Tibial artery (tissue), 4 donors: ENCODE measurements at regions of chr12 and their contacts with region 1.

Region 1: GRCh38 chr12:40152783-40153383 is 47.0 kb upstream of the SLC2A13 start:
- DNase-seq: peak in 1 of 2 donors; percentile 54
- H3K4me3 ChIP-seq: no peak overlapping the region
- H3K27ac ChIP-seq: no peak overlapping the region
- H3K4me1 ChIP-seq: no peaks in the 10 kb centered on the region
- H3K27me3 ChIP-seq: no peaks in the 10 kb centered on the region
- CTCF ChIP-seq: peak; percentile 69 to 87

Region 2: DNA sequence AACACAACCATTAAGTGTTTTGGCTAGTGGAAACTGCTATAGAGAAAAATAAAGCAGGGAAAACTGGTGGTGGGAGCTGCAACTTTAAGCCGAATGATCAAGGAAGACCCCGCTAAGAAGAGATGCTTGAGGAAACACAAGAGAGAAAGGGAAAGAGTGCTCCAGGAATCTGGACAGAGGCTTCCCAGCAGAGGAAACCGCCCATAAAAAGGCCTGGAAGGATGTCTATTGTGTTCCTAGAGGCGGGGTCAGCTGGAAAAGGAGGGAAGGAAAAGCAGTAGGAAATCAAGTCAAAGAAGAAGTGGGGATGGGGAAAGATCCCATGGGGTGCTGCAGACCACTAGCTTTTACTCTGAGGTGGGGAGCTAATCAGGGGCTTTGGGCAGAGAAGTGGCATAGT is 59.4 kb before region 1 on chr12:
- intact Hi-C with region 1: no loop called
- DNase-seq: no peak
- H3K4me3 ChIP-seq: no peak overlapping the region
- H3K27ac ChIP-seq: no peak overlapping the region
- H3K4me1 ChIP-seq: no peaks in the 10 kb centered on the region
- H3K27me3 ChIP-seq: no peaks in the 10 kb centered on the region
- CTCF ChIP-seq: no peak

Region 3: DNA sequence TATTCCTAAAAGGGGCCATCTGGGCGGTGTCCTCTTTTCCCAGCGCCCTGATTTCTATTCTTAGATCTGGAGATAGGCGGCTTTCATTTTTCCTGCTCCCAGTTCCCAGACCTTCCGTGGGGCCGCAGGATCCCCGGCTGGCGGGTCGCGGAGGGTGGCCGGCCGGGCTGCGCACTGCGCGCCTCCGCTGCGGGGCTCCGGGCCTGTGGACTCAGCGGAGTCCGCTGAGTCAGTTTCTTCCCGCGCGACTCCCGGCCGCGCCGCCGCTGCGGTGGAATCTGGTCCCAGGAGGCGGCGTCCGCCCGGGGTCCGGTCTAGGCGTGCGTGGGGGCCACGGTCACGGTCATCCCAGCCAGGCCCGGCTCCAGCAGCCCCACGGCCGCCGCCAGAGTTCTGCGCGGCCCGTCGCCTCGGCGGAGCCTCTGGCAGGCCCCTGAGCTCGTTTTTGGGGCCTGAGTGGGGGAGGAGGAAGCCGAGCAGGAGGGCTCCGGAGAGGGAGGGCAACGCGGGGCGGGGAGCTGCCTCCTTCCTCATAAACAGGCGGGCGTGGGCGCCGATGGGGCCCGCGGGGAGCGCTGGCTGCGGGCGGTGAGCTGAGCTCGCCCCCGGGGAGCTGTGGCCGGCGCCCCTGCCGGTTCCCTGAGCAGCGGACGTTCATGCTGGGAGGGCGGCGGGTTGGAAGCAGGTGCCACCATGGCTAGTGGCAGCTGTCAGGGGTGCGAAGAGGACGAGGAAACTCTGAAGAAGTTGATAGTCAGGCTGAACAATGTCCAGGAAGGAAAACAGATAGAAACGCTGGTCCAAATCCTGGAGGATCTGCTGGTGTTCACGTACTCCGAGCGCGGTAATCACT is 71.8 kb after region 1 on chr12 and contains the start of gene LRRK2:
- intact Hi-C with region 1: loop called (anchors 10 kb)
- DNase-seq: peak; percentile 85 to 90
- H3K4me3 ChIP-seq: peak within 1 kb of the TSS; percentile 66 to 81
- H3K27ac ChIP-seq: peak within 1 kb of the TSS; percentile 96 to 97
- H3K4me1 ChIP-seq: peaks cover 0 to 32% (median 2%) of the 10 kb centered on the region in 4 donors
- H3K27me3 ChIP-seq: no peaks in the 10 kb centered on the region
- CTCF ChIP-seq: peak in 1 of 2 experiments; percentile 3

Region 4: GRCh38 chr12:40351976-40352375 is 199.1 kb after region 1 on chr12:
- intact Hi-C with region 1: no loop called
- DNase-seq: no peak
- H3K4me3 ChIP-seq: no peak overlapping the region
- H3K27ac ChIP-seq: no peak overlapping the region
- H3K4me1 ChIP-seq: no peaks in the 10 kb centered on the region
- H3K27me3 ChIP-seq: no peaks in the 10 kb centered on the region
- CTCF ChIP-seq: no peak